Astrocyte of the cerebellum (primary cell): ENCODE measurements at regions of chr12 and their contacts with region 1.

Region 1: GRCh38 chr12:48084066-48084465 is 21.8 kb downstream of the SENP1 start:
- DNase-seq: peak; percentile 9
- H3K4me3 ChIP-seq: no peak overlapping the region
- CTCF ChIP-seq: no peak

Region 2: DNA sequence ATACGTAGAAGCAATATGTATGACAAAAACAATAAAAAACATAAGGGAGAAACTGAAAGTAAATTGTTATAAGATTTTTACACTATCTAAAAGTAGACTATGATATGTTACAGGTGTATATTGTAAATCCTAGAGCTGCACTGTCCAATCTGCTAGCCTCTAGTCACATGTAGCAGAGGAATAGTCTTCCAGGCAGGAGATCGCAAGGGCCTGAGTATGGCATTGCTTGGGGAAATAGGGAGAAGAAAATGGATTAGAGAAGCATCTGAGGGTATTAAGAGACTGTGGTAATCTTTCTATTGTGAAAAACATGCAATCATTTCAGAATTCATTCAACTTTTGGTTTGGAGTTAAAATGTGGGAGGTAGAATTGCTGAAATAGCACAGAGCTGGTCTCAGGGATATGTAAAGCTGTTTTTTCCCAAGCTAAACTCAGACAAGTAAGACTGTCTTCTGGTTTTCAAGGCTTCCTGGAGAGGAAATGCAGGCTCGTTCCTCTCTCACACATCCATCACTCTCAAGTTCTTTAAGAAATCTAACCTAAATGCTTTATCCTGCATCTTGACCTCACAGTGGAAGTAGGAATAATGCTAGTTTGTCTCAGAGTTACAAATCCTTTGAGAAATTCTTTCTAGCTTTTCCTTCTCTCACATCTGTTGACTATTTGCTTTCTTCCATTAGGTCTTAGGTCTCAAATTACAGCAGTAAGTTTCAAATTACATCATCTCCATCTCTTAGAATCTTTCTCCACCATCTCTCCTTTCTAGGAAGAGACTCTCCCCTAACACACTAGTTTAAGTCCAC is 91.7 kb after region 1 on chr12:
- in situ Hi-C with region 1: loop called (anchors 5 kb)
- DNase-seq: no peak
- H3K4me3 ChIP-seq: no peak overlapping the region
- CTCF ChIP-seq: no peak